ENCODE measurements at regions of chr20 and their contacts with region 1.

Region 1: DNA sequence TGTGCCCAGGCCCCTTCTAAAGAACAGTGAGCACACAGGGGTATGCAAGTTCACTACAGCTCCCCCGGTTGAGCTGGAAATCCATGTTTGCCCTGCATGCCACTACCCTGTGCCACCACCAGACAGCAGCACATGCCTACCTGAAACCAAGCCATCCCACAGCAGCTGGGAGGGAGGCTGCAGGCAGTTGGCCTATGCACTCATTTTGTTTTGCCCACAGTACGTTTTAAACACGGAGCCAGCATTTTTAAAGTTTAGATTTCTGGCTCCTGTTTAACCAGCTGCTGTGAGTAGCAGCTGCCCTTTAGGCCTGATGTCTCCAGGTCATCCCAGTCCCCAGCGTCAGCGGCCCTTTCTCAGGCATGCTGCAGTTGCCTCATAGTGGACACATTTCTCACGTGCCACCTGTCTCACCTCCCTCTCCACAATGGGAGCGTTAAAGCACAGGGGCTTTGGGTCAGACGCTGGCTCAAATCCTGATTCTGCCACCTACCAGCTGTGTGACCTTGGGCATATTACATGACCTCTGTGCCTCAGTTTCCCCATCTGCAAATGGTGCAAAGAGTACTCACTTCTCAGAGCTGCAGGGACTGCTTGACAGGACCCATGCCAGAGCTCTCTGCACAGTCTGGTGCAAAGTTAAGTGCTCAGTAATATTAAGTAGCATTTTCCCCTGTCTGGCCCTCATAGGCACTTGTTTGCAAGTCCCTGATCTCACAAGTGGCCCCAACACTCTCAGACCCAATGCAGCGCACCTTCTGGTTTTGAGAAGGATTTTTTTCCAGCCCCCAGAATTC is 8.1 kb upstream of the UBE2V1 start:
- H3K4me3 Mint-ChIP-seq: no peak overlapping the region
- H3K27ac Mint-ChIP-seq: no peak overlapping the region
- H3K4me1 Mint-ChIP-seq: peaks cover 9% of the 10 kb centered on the region
- H3K27me3 Mint-ChIP-seq: no peaks in the 10 kb centered on the region

Region 2: GRCh38 chr20:50165684-50166554 is 44.8 kb after region 1 on chr20:
- intact Hi-C with region 1: loop called (anchors 1 kb)
- H3K4me3 Mint-ChIP-seq: peak overlapping the region; percentile 72
- H3K27ac Mint-ChIP-seq: peak overlapping the region; percentile 97
- H3K4me1 Mint-ChIP-seq: peaks cover 32% of the 10 kb centered on the region
- H3K27me3 Mint-ChIP-seq: peaks cover 3% of the 10 kb centered on the region

Region 3: GRCh38 chr20:50179507-50180016 is 58.5 kb after region 1 on chr20:
- intact Hi-C with region 1: loop called (anchors 2 kb)
- H3K4me3 Mint-ChIP-seq: no peak overlapping the region
- H3K27ac Mint-ChIP-seq: no peak overlapping the region
- H3K4me1 Mint-ChIP-seq: peaks cover 5% of the 10 kb centered on the region
- H3K27me3 Mint-ChIP-seq: peaks cover 9% of the 10 kb centered on the region

Region 4: DNA sequence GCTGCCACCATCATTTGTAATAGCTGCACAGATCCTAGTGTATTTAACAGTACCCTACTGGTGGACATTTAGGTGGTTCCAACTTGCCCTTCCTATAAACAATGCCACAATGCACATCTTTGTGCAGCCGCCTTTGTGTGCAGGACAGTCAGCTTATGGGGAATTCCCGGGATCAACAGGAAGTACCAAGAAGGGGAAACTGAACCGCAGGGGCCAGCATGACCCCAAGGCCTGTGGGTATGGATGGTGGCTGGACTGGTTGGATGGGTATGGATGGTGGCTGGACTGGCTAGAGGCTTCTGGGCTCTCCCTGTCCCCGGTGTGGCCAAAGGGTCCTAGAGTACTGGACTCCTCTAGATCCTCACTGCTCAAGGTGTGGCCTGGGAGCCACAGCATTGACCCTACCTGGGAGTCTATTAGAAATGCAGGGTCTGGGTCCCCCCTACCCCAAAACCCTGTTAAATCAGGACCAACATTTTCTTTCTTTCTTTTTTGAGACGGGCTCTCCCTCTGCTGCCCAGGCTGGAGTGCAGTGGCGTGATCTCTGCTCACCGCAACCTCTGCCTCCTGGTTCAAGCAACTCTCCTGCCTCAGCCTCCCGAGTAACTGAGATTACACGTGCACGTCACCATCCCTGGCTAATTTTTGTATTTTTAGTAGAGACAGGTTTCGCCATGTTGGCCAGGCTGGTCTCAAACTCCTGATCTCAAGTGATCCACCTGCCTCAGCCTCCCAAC is 116.4 kb after region 1 on chr20:
- intact Hi-C with region 1: no loop called
- H3K4me3 Mint-ChIP-seq: no peak overlapping the region
- H3K27ac Mint-ChIP-seq: peak overlapping the region; percentile 36
- H3K4me1 Mint-ChIP-seq: peaks cover 47% of the 10 kb centered on the region
- H3K27me3 Mint-ChIP-seq: peaks cover 15% of the 10 kb centered on the region

Measured in dendritic cell treated with granulocyte-macrophage colony-stimulating factor and Interleukin-4, amounts not matched to agents 40 ng/mL and 50 ng/mL, for 4 days (primary cell).